ENCODE measurements at regions of chr3 and their contacts with region 1.

Region 1: GRCh38 chr3:32510075-32510724 is 7.5 kb upstream of the CMTM6 start:
- DNase-seq: peak; percentile 20
- H3K4me3 ChIP-seq: no peak overlapping the region
- H3K27me3 ChIP-seq: no peaks in the 10 kb centered on the region
- CTCF ChIP-seq: peak; percentile 70

Region 2: DNA sequence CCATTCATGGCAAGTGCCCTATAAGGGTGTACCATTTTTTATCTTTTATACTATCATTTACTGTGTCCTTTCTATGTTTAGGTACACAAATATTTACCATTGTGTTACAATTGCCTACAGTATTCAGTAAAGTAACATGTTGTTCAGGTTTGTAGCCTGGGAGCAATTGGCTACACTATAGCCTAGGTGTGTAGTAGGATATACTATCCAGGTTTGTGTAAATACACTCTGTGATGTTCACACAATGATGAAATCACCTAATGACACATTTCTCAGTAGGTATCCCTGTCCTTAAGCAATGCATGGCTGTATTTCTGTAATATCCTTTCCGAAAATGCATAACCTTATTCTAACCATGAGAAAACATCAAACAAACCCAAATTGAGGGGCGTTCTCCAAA is 156.9 kb after region 1 on chr3:
- CTCF ChIA-PET with region 1: interaction called, 15 read pairs
- POLR2A ChIA-PET with region 1: no interaction called
- DNase-seq: no peak
- H3K4me3 ChIP-seq: no peak overlapping the region
- H3K27me3 ChIP-seq: peaks cover 1% of the 10 kb centered on the region
- CTCF ChIP-seq: no peak

Region 3: GRCh38 chr3:32794487-32795308 is 284.5 kb after region 1 on chr3:
- CTCF ChIA-PET with region 1: no interaction called
- POLR2A ChIA-PET with region 1: no interaction called
- DNase-seq: peak; percentile 30
- H3K4me3 ChIP-seq: no peak overlapping the region
- H3K27me3 ChIP-seq: no peaks in the 10 kb centered on the region; the same call in 1 of the 2 replicates
- CTCF ChIP-seq: no peak